GM12878 (cell line): ENCODE measurements at regions of chr6 and their contacts with region 1.

Region 1: GRCh38 chr6:148166339-148166968 is 176.2 kb upstream of the SASH1 start:
- DNase-seq: no peak
- ATAC-seq: peak; percentile 48; the same call in 2 of the 3 replicates
- H3K4me3 ChIP-seq: no peak overlapping the region
- H3K27ac ChIP-seq: no peak overlapping the region
- H3K4me1 ChIP-seq: no peaks in the 10 kb centered on the region
- H3K27me3 ChIP-seq: no peaks in the 10 kb centered on the region
- CTCF ChIP-seq: peak; percentile 44 to 55 (median 47); a peak in 5 of 6 replicates
- EP300 ChIP-seq: no peak
- POLR2A ChIP-seq: no peak
- RAD21 ChIP-seq: peak; percentile 66

Region 2: DNA sequence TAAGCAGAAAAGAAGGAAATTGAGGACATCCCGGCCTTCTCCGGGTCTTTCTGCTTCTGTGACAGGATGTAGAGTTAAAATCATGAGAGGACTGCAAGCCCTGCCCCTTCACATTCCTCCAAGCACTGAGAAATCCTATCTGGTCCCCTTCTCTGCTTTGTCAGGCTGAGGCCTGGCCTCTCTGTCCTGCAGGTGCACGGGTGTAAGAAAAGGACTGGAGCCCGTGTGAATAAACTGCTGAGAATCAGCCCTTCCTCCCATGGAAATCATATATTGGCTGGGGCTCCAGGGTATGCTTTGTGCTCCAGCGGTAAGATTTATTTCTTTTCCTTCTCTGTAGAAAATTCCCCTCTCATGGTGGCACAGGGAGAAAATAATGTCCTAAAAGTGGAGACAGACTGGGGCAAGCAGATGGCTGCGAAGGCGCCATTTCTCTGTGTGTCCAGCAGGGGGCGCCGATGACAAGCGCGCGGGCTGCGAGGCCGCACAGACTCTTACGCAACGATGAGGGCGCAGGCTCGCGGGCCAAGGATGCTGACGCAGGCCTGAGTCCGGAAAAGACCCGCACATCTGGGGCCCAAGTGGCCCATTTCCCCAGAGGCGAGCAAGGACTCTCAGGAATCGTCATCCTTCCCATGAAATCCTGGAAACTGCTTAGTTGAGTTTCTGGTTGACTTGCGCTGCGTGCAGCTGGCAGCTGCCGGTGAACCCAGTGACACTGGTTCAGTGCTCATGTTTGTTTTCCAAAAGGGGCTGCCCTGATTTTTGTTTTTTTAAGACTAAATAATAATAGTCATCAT is 1309.1 kb before region 1 on chr6:
- CTCF ChIA-PET with region 1: interaction called, 3 read pairs
- POLR2A ChIA-PET with region 1: no interaction called
- RAD21 ChIA-PET with region 1: no interaction called
- SMC1A ChIA-PET with region 1: no interaction called
- in situ Hi-C with region 1: loop called (anchors 10 kb)
- intact Hi-C with region 1: loop called (anchors 5 kb)
- DNase-seq: no peak
- ATAC-seq: peak; percentile 99
- H3K4me3 ChIP-seq: peak overlapping the region; percentile 59; the same call in 1 of the 2 replicates
- H3K27ac ChIP-seq: no peak overlapping the region
- H3K4me1 ChIP-seq: no peaks in the 10 kb centered on the region; the same call in 1 of the 2 replicates
- H3K27me3 ChIP-seq: no peaks in the 10 kb centered on the region; a peak in 1 of 4 replicates
- CTCF ChIP-seq: peak; percentile 96 to 97 (median 96); a peak in 5 of 6 replicates
- EP300 ChIP-seq: no peak
- POLR2A ChIP-seq: no peak
- RAD21 ChIP-seq: peak; percentile 87

Region 3: GRCh38 chr6:147390909-147391536 is 775.4 kb before region 1 on chr6:
- CTCF ChIA-PET with region 1: interaction called, 3 read pairs
- POLR2A ChIA-PET with region 1: no interaction called
- RAD21 ChIA-PET with region 1: no interaction called
- SMC1A ChIA-PET with region 1: no interaction called
- in situ Hi-C with region 1: no loop called
- intact Hi-C with region 1: loop called (anchors 2 kb)
- DNase-seq: no peak
- ATAC-seq: no peak
- H3K4me3 ChIP-seq: no peak overlapping the region
- H3K27ac ChIP-seq: no peak overlapping the region
- H3K4me1 ChIP-seq: no peaks in the 10 kb centered on the region
- H3K27me3 ChIP-seq: no peaks in the 10 kb centered on the region
- CTCF ChIP-seq: peak in 2 of 3 experiments; percentile 17 to 58; a peak in 3 of 6 replicates
- EP300 ChIP-seq: no peak
- POLR2A ChIP-seq: no peak
- RAD21 ChIP-seq: peak; percentile 61

Region 4: GRCh38 chr6:147506704-147507114 is 659.7 kb before region 1 on chr6:
- CTCF ChIA-PET with region 1: interaction called, 4 read pairs
- POLR2A ChIA-PET with region 1: no interaction called
- RAD21 ChIA-PET with region 1: interaction called, 5 read pairs
- SMC1A ChIA-PET with region 1: no interaction called
- in situ Hi-C with region 1: loop called (anchors 10 kb)
- intact Hi-C with region 1: loop called (anchors 2 kb)
- DNase-seq: no peak
- ATAC-seq: peak; percentile 83
- H3K4me3 ChIP-seq: no peak overlapping the region
- H3K27ac ChIP-seq: no peak overlapping the region
- H3K4me1 ChIP-seq: no peaks in the 10 kb centered on the region
- H3K27me3 ChIP-seq: peaks cover 8 to 16% of the 10 kb centered on the region in 2 experiments
- CTCF ChIP-seq: peak; percentile 45 to 51 (median 46); a peak in 5 of 6 replicates
- EP300 ChIP-seq: no peak
- POLR2A ChIP-seq: no peak
- RAD21 ChIP-seq: peak; percentile 65

Region 5: GRCh38 chr6:148144917-148145521 is 21.4 kb before region 1 on chr6:
- CTCF ChIA-PET with region 1: interaction called, 13 read pairs
- POLR2A ChIA-PET with region 1: no interaction called
- RAD21 ChIA-PET with region 1: interaction called, 4 read pairs
- SMC1A ChIA-PET with region 1: interaction called, 5 read pairs
- in situ Hi-C with region 1: no loop called
- intact Hi-C with region 1: loop called (anchors 1 kb)
- DNase-seq: no peak
- ATAC-seq: peak; percentile 91
- H3K4me3 ChIP-seq: no peak overlapping the region
- H3K27ac ChIP-seq: no peak overlapping the region
- H3K4me1 ChIP-seq: no peaks in the 10 kb centered on the region
- H3K27me3 ChIP-seq: no peaks in the 10 kb centered on the region
- CTCF ChIP-seq: peak; percentile 71 to 87 (median 74)
- EP300 ChIP-seq: no peak
- POLR2A ChIP-seq: no peak
- RAD21 ChIP-seq: peak; percentile 55

Region 6: GRCh38 chr6:148151931-148152643 is 14.4 kb before region 1 on chr6:
- CTCF ChIA-PET with region 1: interaction called, 13 read pairs
- POLR2A ChIA-PET with region 1: no interaction called
- RAD21 ChIA-PET with region 1: interaction called, 4 read pairs
- SMC1A ChIA-PET with region 1: no interaction called
- in situ Hi-C with region 1: no loop called
- intact Hi-C with region 1: no loop called
- DNase-seq: no peak
- ATAC-seq: no peak
- H3K4me3 ChIP-seq: no peak overlapping the region
- H3K27ac ChIP-seq: no peak overlapping the region
- H3K4me1 ChIP-seq: no peaks in the 10 kb centered on the region
- H3K27me3 ChIP-seq: no peaks in the 10 kb centered on the region; a peak in 1 of 4 replicates
- CTCF ChIP-seq: no peak
- EP300 ChIP-seq: no peak
- POLR2A ChIP-seq: no peak
- RAD21 ChIP-seq: no peak

Region 7: GRCh38 chr6:148177589-148178233 is 11.3 kb after region 1 on chr6:
- CTCF ChIA-PET with region 1: interaction called, 18 read pairs
- POLR2A ChIA-PET with region 1: no interaction called
- RAD21 ChIA-PET with region 1: no interaction called
- SMC1A ChIA-PET with region 1: no interaction called
- in situ Hi-C with region 1: no loop called
- intact Hi-C with region 1: no loop called
- DNase-seq: no peak
- ATAC-seq: no peak
- H3K4me3 ChIP-seq: no peak overlapping the region
- H3K27ac ChIP-seq: no peak overlapping the region
- H3K4me1 ChIP-seq: no peaks in the 10 kb centered on the region
- H3K27me3 ChIP-seq: no peaks in the 10 kb centered on the region
- CTCF ChIP-seq: peak; percentile 58 to 71 (median 62); a peak in 5 of 6 replicates
- EP300 ChIP-seq: no peak
- POLR2A ChIP-seq: no peak
- RAD21 ChIP-seq: peak; percentile 57